ENCODE measurements at regions of chr5 and their contacts with region 1.

Region 1: DNA sequence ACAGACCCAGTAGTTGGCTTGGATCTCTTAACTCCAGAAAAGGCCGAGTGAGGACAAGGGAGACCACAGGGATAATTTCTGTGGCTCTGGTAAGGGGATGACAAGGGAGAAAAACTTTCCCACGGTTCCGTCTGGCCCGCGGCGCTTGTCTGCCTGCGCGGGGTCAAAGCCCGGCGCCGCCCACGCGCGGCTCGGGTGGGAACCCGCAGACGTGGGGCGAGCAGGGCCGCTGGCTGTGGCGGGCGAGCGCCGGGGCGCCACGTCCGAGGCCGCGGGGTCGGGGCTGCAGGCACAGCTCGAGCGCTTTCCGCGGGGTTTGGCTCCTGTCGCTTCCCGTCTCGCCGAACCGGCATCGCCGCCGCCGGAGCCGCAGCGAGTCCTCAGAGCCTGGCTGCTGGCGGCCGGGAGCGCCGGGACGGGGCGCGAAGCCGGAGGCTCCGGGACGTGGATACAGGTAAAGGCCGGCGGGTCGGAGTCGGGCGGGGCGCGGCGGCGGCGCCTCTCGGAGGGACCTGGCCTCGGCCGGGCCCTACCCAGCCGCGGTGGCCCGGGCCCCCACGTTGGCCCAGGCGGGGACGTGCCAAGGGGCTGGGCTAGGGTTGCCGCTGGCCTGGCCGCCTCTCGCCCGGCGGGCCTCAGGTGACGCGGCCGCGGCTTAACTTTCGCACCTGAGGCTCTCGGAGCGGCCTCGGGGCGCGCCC is at the start of gene RNF180:
- DNase-seq: no peak
- ATAC-seq: peak; percentile 21
- H3K4me3 ChIP-seq: no peak within 1 kb of the TSS
- H3K27ac ChIP-seq: no peak within 1 kb of the TSS
- H3K4me1 ChIP-seq: no peaks in the 10 kb centered on the region
- H3K27me3 ChIP-seq: peaks cover 0 to 13% of the 10 kb centered on the region in 2 experiments
- CTCF ChIP-seq: no peak
- EP300 ChIP-seq: no peak
- POLR2A ChIP-seq: no peak
- RAD21 ChIP-seq: no peak
- polyA plus RNA-seq, gene RNF180: 0.16 to 0.20 TPM

Region 2: GRCh38 chr5:64188776-64189175 is 23.1 kb after region 1 on chr5:
- CTCF ChIA-PET with region 1: interaction called, 3 read pairs
- POLR2A ChIA-PET with region 1: no interaction called
- RAD21 ChIA-PET with region 1: interaction called, 11 read pairs
- SMC1A ChIA-PET with region 1: interaction called, 3 read pairs
- in situ Hi-C with region 1: no loop called
- intact Hi-C with region 1: no loop called
- DNase-seq: no peak
- ATAC-seq: peak; percentile 60
- H3K4me3 ChIP-seq: no peak overlapping the region
- H3K27ac ChIP-seq: no peak overlapping the region
- H3K4me1 ChIP-seq: no peaks in the 10 kb centered on the region
- H3K27me3 ChIP-seq: no peaks in the 10 kb centered on the region
- CTCF ChIP-seq: no peak
- EP300 ChIP-seq: no peak
- POLR2A ChIP-seq: no peak
- RAD21 ChIP-seq: no peak

Region 3: GRCh38 chr5:64199425-64199824 is 33.8 kb after region 1 on chr5:
- CTCF ChIA-PET with region 1: interaction called, 5 read pairs
- POLR2A ChIA-PET with region 1: interaction called, 7 read pairs
- RAD21 ChIA-PET with region 1: interaction called, 8 read pairs
- SMC1A ChIA-PET with region 1: interaction called, 8 read pairs
- in situ Hi-C with region 1: no loop called
- intact Hi-C with region 1: loop called (anchors 2 kb)
- DNase-seq: no peak
- ATAC-seq: peak; percentile 67
- H3K4me3 ChIP-seq: no peak overlapping the region
- H3K27ac ChIP-seq: no peak overlapping the region
- H3K4me1 ChIP-seq: no peaks in the 10 kb centered on the region
- H3K27me3 ChIP-seq: no peaks in the 10 kb centered on the region
- CTCF ChIP-seq: no peak
- EP300 ChIP-seq: no peak
- POLR2A ChIP-seq: no peak
- RAD21 ChIP-seq: no peak

Region 4: GRCh38 chr5:64260756-64261155 is 95.1 kb after region 1 on chr5:
- CTCF ChIA-PET with region 1: no interaction called
- POLR2A ChIA-PET with region 1: no interaction called
- RAD21 ChIA-PET with region 1: no interaction called
- SMC1A ChIA-PET with region 1: no interaction called
- in situ Hi-C with region 1: no loop called
- intact Hi-C with region 1: no loop called
- DNase-seq: no peak
- ATAC-seq: no peak
- H3K4me3 ChIP-seq: no peak overlapping the region
- H3K27ac ChIP-seq: no peak overlapping the region
- H3K4me1 ChIP-seq: no peaks in the 10 kb centered on the region
- H3K27me3 ChIP-seq: no peaks in the 10 kb centered on the region
- CTCF ChIP-seq: no peak
- EP300 ChIP-seq: no peak
- POLR2A ChIP-seq: no peak
- RAD21 ChIP-seq: no peak

Measured in GM12878 (cell line).